ENCODE measurements at regions of chr18 and their contacts with region 1.

Region 1: GRCh38 chr18:73218293-73218692 is 350.5 kb upstream of the NETO1 start:
- DNase-seq: no peak
- H3K4me3 ChIP-seq: no peak overlapping the region
- H3K27ac ChIP-seq: no peak overlapping the region
- H3K4me1 ChIP-seq: no peaks in the 10 kb centered on the region
- H3K27me3 ChIP-seq: no peaks in the 10 kb centered on the region
- CTCF ChIP-seq: no peak
- EP300 ChIP-seq: no peak
- POLR2A ChIP-seq: no peak

Region 2: GRCh38 chr18:73144030-73144429 is 74.3 kb before region 1 on chr18:
- intact Hi-C with region 1: loop called in 1 of 4 experiments (anchors 2 kb)
- DNase-seq: no peak
- H3K4me3 ChIP-seq: no peak overlapping the region
- H3K27ac ChIP-seq: no peak overlapping the region
- H3K4me1 ChIP-seq: no peaks in the 10 kb centered on the region
- H3K27me3 ChIP-seq: no peaks in the 10 kb centered on the region
- CTCF ChIP-seq: no peak
- EP300 ChIP-seq: no peak
- POLR2A ChIP-seq: no peak